ENCODE measurements at regions of chr13 and their contacts with region 1.

Region 1: DNA sequence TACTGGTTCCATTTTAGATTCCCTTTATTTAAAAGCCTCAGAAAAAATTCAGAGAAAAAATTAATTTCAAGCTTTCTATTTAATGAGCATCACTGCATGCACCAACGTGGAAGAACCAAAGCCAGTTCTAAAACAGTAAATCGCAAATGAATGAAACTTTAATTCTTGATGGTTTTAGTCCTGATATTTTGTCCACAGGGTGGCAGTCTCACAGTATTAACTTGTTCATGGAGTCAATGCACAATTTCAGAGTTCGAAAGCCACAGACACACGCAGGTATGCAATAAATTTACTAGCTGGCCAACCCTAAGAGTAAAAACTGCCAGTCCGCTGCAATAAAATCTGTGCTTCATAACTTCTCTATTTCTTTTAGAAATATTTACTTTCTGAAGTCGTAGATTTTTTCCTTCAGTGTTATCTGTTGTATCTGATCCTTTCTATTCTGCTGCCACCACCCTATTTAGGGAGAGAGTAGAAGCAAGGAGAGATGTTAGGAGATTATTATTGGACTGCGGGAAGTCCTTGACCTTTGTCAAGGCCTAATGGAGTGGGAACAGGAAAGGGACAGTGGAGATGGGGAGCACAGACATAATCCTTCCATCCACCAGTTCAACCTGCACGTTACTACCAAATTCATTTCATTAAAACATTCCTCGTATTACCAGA is 7.0 kb upstream of the WBP4 start:
- DNase-seq: peak; percentile 54
- ATAC-seq: peak; percentile 40
- H3K4me3 Mint-ChIP-seq: peak overlapping the region; percentile 19
- H3K27ac Mint-ChIP-seq: no peak overlapping the region
- H3K4me1 Mint-ChIP-seq: peaks cover 69% of the 10 kb centered on the region
- H3K27me3 Mint-ChIP-seq: no peaks in the 10 kb centered on the region

Region 2: DNA sequence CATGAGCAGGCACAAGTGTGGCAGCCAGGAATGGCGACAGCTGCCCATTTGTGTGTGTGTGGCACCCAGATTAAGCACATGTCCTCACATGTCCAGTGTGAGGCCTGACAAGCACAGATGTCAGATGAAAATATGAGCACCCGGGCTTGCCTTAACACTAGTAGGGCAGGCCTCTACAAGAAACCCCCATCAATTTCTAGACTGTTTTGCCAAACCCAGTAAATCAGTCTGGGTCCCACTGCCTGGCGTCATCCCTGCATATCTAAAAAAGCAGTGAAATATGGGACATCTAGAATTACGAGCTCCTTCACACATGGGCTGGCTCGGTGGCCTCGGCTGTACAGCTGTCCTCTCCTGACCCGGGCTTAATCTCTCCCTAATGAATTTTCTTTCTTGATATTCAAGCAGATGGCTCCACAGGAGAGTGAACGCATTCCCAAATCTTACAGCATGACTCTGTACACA is 820.6 kb before region 1 on chr13:
- CTCF ChIA-PET with region 1: no interaction called
- POLR2A ChIA-PET with region 1: no interaction called
- intact Hi-C with region 1: no loop called
- DNase-seq: no peak
- ATAC-seq: no peak
- H3K4me3 Mint-ChIP-seq: no peak overlapping the region
- H3K27ac Mint-ChIP-seq: no peak overlapping the region
- H3K4me1 Mint-ChIP-seq: peaks cover 23% of the 10 kb centered on the region
- H3K27me3 Mint-ChIP-seq: no peaks in the 10 kb centered on the region

Region 3: DNA sequence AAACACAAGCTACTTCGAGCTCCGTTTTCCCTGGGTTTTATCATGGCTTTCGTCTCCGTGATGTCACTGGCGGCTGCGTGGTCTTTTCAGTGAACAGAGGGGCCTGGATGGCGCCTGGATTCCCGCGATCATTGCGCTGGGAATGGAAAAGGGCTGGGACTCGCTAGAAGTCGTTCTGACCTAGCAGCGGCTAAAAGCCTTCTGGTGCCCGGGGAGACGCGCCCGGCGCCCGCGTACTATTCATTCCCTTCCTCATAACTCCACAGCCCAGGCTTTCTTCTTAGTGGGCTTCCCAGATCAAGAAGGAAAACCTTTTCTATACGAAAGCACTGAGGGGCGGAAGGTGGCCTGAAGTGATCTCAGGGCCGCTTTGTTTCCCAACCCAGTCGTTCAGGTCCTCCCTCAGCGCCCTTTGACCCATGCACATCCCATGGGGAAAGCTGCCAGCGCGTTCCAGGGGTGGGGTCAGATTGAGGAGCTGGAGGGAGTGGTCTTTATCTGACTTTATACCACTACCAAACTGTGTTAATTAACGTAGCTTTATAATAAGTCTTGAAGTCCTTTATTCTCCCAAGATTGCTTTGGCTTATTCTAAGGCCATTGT is 131.8 kb before region 1 on chr13:
- CTCF ChIA-PET with region 1: interaction called, 10 read pairs
- POLR2A ChIA-PET with region 1: no interaction called
- intact Hi-C with region 1: no loop called
- DNase-seq: no peak
- ATAC-seq: no peak
- H3K4me3 Mint-ChIP-seq: peak overlapping the region; percentile 32
- H3K27ac Mint-ChIP-seq: peak overlapping the region; percentile 76
- H3K4me1 Mint-ChIP-seq: peaks cover 20% of the 10 kb centered on the region
- H3K27me3 Mint-ChIP-seq: no peaks in the 10 kb centered on the region

Region 4: DNA sequence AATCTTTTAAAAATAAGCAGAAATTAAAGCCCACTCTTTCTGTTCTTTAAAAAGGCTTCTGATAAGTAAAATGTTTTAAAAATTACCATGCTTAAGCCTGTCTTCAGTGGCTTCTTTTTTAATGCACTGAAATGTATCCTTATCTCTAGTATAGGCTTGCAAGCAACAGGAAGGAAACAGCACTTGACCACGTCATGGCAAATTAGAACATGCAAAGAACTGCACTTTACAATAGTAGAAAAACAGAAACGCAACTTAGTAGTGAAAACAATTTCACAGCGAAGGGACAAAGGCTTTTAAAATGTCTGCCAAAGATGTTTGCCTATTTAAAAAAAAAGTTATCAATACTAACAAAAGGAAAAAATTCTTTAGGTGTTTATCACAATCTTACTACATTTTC is 71.6 kb before region 1 on chr13:
- CTCF ChIA-PET with region 1: interaction called, 10 read pairs
- POLR2A ChIA-PET with region 1: no interaction called
- intact Hi-C with region 1: no loop called
- DNase-seq: peak; percentile 70
- ATAC-seq: peak; percentile 62
- H3K4me3 Mint-ChIP-seq: peak overlapping the region; percentile 91
- H3K27ac Mint-ChIP-seq: peak overlapping the region; percentile 92
- H3K4me1 Mint-ChIP-seq: peaks cover 66% of the 10 kb centered on the region
- H3K27me3 Mint-ChIP-seq: no peaks in the 10 kb centered on the region

Region 5: DNA sequence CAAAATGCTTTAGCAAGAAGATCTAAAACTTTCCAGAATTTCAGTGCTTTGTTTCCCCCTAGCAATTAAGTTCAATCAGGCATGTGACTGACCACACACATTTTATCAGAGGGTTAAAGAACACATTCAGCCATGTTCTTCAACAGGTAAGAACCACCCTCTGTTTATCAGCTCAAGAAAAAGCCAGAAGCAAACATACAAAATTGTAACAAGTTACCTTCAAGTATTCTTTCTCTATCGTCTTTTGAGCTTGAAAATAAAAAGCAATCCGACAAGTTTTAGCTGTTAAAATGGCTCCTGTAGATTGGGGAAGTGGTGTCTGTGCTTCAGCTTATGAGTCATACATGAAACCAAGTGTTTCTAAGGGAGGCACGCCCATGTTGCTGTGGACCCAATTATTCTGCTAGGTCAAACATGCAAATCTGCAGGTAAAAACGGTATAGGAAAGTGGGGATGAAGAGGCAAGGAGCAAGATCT is 35.3 kb before region 1 on chr13 and contains the start of gene ELF1:
- CTCF ChIA-PET with region 1: interaction called, 32 read pairs
- POLR2A ChIA-PET with region 1: no interaction called
- intact Hi-C with region 1: no loop called
- DNase-seq: peak; percentile 67
- ATAC-seq: peak; percentile 87
- H3K4me3 Mint-ChIP-seq: peak within 1 kb of the TSS; percentile 88
- H3K27ac Mint-ChIP-seq: peak within 1 kb of the TSS; percentile 96
- H3K4me1 Mint-ChIP-seq: peaks cover 31% of the 10 kb centered on the region
- H3K27me3 Mint-ChIP-seq: no peaks in the 10 kb centered on the region
- total RNA-seq, gene ELF1: 75.2 to 87.0 TPM

Region 6: GRCh38 chr13:41075034-41075433 is 20.7 kb after region 1 on chr13:
- CTCF ChIA-PET with region 1: interaction called, 10 read pairs
- POLR2A ChIA-PET with region 1: no interaction called
- intact Hi-C with region 1: no loop called
- DNase-seq: peak; percentile 32
- ATAC-seq: no peak
- H3K4me3 Mint-ChIP-seq: no peak overlapping the region
- H3K27ac Mint-ChIP-seq: no peak overlapping the region
- H3K4me1 Mint-ChIP-seq: peaks cover 2% of the 10 kb centered on the region
- H3K27me3 Mint-ChIP-seq: no peaks in the 10 kb centered on the region

Region 7: DNA sequence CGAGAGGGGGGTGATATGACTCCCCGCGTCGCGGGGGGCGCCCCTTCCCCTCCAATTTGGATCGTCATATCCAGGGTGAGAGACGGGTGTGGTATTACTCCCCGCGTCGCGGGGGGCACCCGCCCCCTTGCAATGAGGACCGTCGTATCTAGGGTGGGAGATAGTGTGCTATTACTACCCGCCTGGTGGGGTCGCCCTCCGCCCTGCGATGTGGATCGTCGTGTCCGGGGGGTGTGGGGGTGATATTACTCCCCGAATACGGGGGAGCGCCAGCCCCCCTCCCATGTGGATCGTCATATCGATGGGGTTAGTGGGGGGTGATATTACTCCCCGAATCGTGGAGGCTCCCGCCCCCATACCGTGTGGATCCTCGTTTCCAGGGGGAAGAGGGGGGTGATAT is 373.8 kb after region 1 on chr13:
- CTCF ChIA-PET with region 1: no interaction called
- POLR2A ChIA-PET with region 1: no interaction called
- intact Hi-C with region 1: no loop called
- DNase-seq: peak; percentile 65
- ATAC-seq: peak; percentile 75
- H3K4me3 Mint-ChIP-seq: no peak overlapping the region
- H3K27ac Mint-ChIP-seq: no peak overlapping the region
- H3K4me1 Mint-ChIP-seq: peaks cover 6% of the 10 kb centered on the region
- H3K27me3 Mint-ChIP-seq: peaks cover 3% of the 10 kb centered on the region